Common myeloid progenitor, CD34-positive (primary cell): ENCODE measurements at regions of chr3 and their contacts with region 1.

Region 1: DNA sequence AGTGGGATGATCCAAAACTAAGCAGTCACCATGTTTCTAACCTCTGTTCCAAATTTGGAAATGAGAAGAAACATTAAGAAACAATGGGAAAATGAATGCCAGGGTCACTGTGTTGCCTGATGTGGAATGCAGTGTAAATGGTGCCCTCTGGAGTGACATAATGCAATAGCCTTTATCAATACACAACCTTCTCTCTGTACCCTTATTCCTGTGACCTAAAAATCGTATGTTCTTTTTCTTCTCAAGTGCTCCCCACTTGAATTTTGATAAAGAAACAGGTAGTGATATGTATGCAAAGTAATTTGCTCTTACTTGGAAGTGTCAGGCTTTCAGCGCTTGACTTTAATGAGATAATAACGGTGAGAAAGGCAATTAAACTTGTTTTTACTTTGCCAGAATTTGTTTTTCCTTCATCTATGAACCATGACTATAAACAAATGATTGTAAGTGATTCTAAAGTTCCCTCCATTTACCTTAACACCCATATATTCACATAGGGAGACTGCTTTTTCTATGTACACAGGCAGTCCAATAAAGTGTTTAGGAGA is 145.8 kb upstream of the THRB start:
- DNase-seq: peak; percentile 51 to 57 (median 56)
- H3K4me3 ChIP-seq: no peak overlapping the region
- H3K27ac ChIP-seq: no peak overlapping the region
- H3K4me1 ChIP-seq: peaks cover 0 to 17% (median 8%) of the 10 kb centered on the region in 4 experiments
- H3K27me3 ChIP-seq: no peaks in the 10 kb centered on the region

Region 2: GRCh38 chr3:24628523-24629258 is 11.7 kb before region 1 on chr3:
- CTCF ChIA-PET with region 1: interaction called, 11 read pairs
- POLR2A ChIA-PET with region 1: no interaction called
- DNase-seq: peak in 1 of 3 donors; percentile 23
- H3K4me3 ChIP-seq: no peak overlapping the region
- H3K27ac ChIP-seq: no peak overlapping the region
- H3K4me1 ChIP-seq: peaks cover 0 to 6% (median 2%) of the 10 kb centered on the region in 4 experiments
- H3K27me3 ChIP-seq: no peaks in the 10 kb centered on the region